ENCODE measurements at regions of chr1 and their contacts with region 1.

Region 1: DNA sequence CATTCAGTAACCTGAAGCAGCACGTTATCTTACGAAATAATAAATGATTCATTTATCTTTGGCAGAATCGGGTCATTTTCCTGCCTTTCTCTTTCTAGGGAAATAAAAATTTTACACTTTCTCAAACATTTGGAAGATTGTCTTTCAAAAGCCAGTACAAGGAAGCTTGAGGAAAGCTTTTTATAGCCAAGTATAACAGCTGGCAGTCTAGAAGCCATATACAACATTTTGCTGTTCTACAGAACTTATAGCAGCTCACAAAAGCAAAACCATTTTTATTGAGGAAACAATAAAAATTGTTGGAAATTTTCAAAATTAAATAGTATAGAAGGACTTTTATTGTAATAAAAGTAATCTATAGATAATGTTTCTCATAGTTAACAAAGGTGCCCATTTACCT is 448.6 kb downstream of the SMYD3 start:
- DNase-seq: no peak
- ATAC-seq: no peak
- H3K4me3 ChIP-seq: no peak overlapping the region
- H3K27ac ChIP-seq: no peak overlapping the region
- H3K4me1 ChIP-seq: peaks cover 0 to 4% of the 10 kb centered on the region in 2 experiments; a peak in 3 of 5 replicates
- H3K27me3 ChIP-seq: no peaks in the 10 kb centered on the region
- CTCF ChIP-seq: no peak
- EP300 ChIP-seq: no peak
- POLR2A ChIP-seq: no peak
- RAD21 ChIP-seq: no peak

Region 2: DNA sequence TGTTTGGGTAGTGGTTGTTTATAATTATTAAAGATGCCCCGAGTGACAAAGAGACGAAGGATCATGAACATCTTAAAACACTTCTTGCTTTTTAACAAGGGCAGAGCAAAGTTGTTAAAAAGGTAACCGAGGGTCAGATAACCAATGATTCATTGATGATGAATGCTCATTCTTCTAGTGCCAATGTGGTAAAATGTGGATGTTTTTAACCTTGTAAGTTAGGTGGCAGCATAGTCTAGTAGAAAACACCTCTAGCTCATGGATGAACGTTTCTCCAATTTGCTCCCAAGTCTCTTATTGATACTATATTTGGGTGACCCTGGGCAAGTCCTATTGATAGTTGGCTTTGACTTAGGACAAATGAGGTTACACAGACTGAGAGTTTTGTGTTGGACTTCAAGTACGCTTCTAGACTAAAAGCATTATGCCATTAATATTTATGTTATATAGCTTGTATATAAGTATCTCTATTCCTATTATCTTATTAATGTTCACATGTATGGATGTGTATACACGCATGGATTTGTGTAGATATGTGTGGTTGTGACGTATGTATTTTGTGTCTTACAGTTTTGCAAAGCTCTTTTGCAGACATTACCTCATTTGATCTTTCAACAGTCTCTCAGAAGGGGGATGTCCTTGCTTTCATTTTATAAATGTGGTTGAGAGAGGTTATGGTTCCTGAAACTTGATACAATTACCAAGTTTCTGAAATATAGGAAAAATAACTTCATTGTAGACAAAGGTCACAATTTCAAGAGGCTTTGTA is 735.6 kb before region 1 on chr1:
- CTCF ChIA-PET with region 1: no interaction called
- POLR2A ChIA-PET with region 1: no interaction called
- in situ Hi-C with region 1: no loop called
- intact Hi-C with region 1: loop called (anchors 5 kb)
- DNase-seq: no peak
- ATAC-seq: no peak
- H3K4me3 ChIP-seq: no peak overlapping the region
- H3K27ac ChIP-seq: no peak overlapping the region
- H3K4me1 ChIP-seq: no peaks in the 10 kb centered on the region
- H3K27me3 ChIP-seq: peaks cover 47 to 59% of the 10 kb centered on the region in 2 experiments
- CTCF ChIP-seq: peak in 2 of 3 experiments; percentile 14 to 45; a peak in 2 of 6 replicates
- EP300 ChIP-seq: no peak
- POLR2A ChIP-seq: no peak
- RAD21 ChIP-seq: peak; percentile 27 to 41; a peak in 2 of 4 replicates

Region 3: GRCh38 chr1:245939756-245940345 is 118.6 kb before region 1 on chr1:
- CTCF ChIA-PET with region 1: no interaction called
- POLR2A ChIA-PET with region 1: no interaction called
- in situ Hi-C with region 1: no loop called
- intact Hi-C with region 1: no loop called
- DNase-seq: no peak
- ATAC-seq: no peak
- H3K4me3 ChIP-seq: no peak overlapping the region
- H3K27ac ChIP-seq: no peak overlapping the region
- H3K4me1 ChIP-seq: no peaks in the 10 kb centered on the region; a peak in 1 of 5 replicates
- H3K27me3 ChIP-seq: no peaks in the 10 kb centered on the region
- CTCF ChIP-seq: no peak
- EP300 ChIP-seq: no peak
- POLR2A ChIP-seq: no peak
- RAD21 ChIP-seq: no peak